Left ventricle myocardium superior (tissue), 1 donor: ENCODE measurements at regions of chr14 and their contacts with region 1.

Region 1: GRCh38 chr14:51283402-51284085 is 43.5 kb downstream of the TMX1 start:
- DNase-seq: no peak
- ATAC-seq: peak; percentile 90

Region 2: GRCh38 chr14:51638071-51638944 is 354.8 kb after region 1 on chr14:
- intact Hi-C with region 1: no loop called
- DNase-seq: no peak
- ATAC-seq: peak; percentile 66

Region 3: DNA sequence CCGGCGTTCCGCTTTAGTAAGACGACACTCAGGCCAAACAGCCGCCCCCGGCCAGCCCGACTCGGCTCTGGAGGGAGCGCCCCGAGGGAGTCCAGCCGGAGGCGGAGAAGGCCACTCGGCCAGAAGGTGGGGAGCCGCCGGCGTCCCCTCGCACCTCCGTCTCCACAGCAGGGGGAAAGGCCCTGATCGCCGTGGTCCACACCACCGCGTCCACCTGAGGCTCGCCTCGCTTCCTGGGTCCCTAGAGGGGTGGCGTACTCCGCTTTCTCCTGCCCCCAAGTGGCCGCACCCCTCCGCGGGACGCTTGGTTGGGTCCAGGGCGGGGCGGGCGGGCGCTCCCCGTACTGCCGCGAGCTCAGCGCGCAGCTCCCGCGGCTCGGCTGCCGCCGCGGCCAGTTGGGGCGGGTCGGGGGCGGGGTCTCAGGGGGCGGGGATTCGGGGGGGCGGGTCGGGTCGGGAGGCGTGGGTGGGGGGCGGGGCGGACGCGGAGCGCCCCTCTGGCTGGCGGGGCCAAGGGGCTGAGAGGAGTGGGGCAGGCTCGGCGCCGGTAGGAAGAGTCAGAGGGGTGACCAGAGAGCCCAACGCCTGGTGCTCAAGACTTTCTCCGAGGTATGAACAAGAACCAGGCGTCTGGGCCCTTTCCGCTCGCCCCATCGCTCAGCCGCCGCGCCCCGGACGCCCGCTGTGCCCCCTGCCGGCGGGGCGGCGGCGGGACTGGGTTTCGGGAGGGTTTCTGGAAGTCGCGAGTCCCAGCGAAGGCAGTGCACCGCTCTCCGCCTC is 368.0 kb after region 1 on chr14 and contains the start of gene FRMD6:
- intact Hi-C with region 1: loop called (anchors 5 kb)
- DNase-seq: peak; percentile 93
- ATAC-seq: peak; percentile 93
- total RNA-seq, gene FRMD6: 11.1 TPM